Endothelial cell of umbilical vein (primary cell): ENCODE measurements at regions of chr14 and their contacts with region 1.

Region 1: GRCh38 chr14:62162998-62163589 is 400.9 kb downstream of the SNAPC1 start:
- DNase-seq: peak; percentile 46
- H3K4me3 ChIP-seq: no peak overlapping the region
- H3K27ac ChIP-seq: no peak overlapping the region
- H3K4me1 ChIP-seq: no peaks in the 10 kb centered on the region
- H3K27me3 ChIP-seq: peaks cover 7 to 10% of the 10 kb centered on the region in 2 experiments
- CTCF ChIP-seq: peak; percentile 62 to 69
- POLR2A ChIP-seq: no peak

Region 2: DNA sequence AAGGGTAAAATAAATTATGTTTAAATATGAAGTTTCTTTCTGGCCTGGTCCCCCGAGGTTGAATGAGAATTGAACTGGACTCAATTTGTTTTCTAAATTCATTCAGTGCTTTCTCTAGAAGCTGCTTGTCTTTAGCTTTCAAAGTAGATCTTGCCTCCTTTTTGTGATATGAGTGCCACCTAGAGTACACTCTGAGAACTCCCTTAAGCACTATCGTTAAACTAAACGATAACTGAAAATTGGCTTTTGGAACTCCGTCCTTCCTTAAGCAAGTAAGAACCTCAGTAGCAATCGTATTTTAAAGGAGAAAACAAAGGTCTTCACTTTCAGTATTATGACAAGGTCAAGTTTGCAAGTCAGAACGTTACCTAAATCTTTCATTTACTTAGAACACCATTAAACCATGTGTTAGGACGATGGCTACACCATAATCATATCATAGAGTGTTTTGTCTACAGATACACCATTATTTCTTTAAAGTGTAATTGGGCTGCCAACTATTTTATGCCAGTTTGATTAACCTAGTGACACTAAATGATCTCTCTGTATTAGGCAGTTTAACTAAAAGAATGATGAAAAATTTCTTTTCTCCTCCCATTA is 36.1 kb before region 1 on chr14:
- CTCF ChIA-PET with region 1: no interaction called
- POLR2A ChIA-PET with region 1: no interaction called
- dilution Hi-C with region 1: no loop called
- intact Hi-C with region 1: no loop called
- DNase-seq: peak; percentile 75
- H3K4me3 ChIP-seq: no peak overlapping the region
- H3K27ac ChIP-seq: no peak overlapping the region
- H3K4me1 ChIP-seq: no peaks in the 10 kb centered on the region
- H3K27me3 ChIP-seq: peaks cover 42 to 66% of the 10 kb centered on the region in 2 experiments
- CTCF ChIP-seq: peak; percentile 44 to 63
- POLR2A ChIP-seq: no peak

Region 3: DNA sequence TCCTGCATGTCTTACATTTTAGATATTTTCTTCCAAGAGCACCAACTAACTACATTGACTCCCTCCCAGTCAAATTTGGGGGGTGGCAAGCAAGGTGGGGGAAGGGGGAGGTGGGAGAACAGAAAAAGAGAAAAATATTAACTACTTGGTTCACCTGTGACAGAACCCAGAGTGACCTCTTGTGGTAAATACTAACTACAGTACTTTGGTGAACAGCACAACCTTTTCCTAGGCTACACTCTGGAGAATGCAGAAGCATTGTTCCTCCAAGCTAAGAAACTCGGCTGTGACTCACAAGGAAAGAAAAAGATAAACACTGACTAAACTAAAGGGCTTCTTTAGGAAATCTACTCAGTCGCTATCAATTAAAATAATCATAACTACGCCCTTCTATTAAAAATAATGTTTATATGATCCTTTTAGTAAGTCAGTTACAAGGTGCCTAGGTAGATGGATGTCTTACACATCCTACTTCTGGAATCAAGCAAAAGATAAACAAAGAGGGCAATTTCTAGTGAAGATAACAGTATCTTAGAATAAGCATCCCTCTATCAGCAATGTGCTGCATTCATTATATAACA is 876.8 kb after region 1 on chr14:
- CTCF ChIA-PET with region 1: interaction called, 9 read pairs
- POLR2A ChIA-PET with region 1: no interaction called
- dilution Hi-C with region 1: no loop called
- intact Hi-C with region 1: loop called (anchors 2 kb)
- DNase-seq: peak; percentile 66
- H3K4me3 ChIP-seq: no peak overlapping the region
- H3K27ac ChIP-seq: no peak overlapping the region
- H3K4me1 ChIP-seq: peaks cover 2% of the 10 kb centered on the region
- H3K27me3 ChIP-seq: peaks cover 33 to 58% of the 10 kb centered on the region in 2 experiments
- CTCF ChIP-seq: peak in 1 of 2 donors; percentile 24
- POLR2A ChIP-seq: no peak